ENCODE measurements at regions of chr6 and their contacts with region 1.

Region 1: GRCh38 chr6:11653028-11653583 is 115.6 kb downstream of the TMEM170B start:
- DNase-seq: peak; percentile 76
- H3K4me3 Mint-ChIP-seq: no peak overlapping the region
- H3K27ac Mint-ChIP-seq: no peak overlapping the region
- H3K4me1 Mint-ChIP-seq: peaks cover 12% of the 10 kb centered on the region
- H3K27me3 Mint-ChIP-seq: no peaks in the 10 kb centered on the region

Region 2: DNA sequence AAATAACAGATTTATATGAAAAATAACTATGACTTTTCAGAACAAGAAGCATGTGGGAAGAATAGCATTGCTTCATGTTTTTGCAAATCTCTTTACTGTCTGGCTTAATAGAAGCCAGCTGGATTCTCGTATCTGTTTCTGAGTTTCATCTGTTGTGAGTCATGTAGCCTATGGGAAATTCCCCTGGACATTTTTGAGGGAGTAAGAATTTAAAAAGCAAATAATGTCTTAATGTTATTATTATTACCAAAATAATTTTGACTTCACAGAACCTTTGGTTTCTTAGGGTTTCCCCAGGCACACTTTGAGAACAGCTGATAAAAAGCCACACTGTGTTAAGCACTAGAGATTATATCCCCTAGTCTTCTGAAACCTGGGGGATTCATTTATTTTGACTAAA is 690.4 kb before region 1 on chr6:
- CTCF ChIA-PET with region 1: no interaction called
- intact Hi-C with region 1: no loop called
- DNase-seq: no peak
- H3K4me3 Mint-ChIP-seq: no peak overlapping the region
- H3K27ac Mint-ChIP-seq: no peak overlapping the region
- H3K4me1 Mint-ChIP-seq: no peaks in the 10 kb centered on the region
- H3K27me3 Mint-ChIP-seq: peaks cover 11% of the 10 kb centered on the region

Region 3: DNA sequence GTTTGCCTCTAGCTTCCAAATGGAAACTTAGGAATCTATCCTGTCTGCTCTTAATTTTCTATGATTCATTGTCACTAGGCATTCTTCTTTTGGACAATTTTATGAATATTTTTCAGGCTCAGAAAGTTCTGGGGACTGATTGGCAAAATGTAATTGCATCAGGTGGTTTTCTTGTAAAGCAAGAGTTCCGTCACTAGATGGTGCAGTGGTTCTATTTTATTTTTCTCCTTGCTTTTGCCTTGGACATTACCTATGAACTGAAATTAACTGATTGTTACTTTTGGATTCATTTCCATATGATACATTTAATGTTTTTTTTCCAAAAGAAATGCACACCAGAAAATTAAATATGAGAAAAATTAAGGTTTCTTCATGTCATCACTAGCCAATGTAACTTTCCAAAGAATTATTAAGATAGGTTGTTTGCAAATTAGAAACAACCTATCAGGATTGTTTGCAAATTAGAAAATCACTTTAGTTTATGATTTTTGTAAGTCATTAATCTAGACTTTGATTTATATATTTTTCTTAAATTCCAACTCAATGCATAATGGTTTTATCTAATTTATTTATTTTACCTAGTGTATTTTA is 67.6 kb before region 1 on chr6:
- CTCF ChIA-PET with region 1: no interaction called
- intact Hi-C with region 1: loop called (anchors 5 kb)
- DNase-seq: peak; percentile 14
- H3K4me3 Mint-ChIP-seq: no peak overlapping the region
- H3K27ac Mint-ChIP-seq: no peak overlapping the region
- H3K4me1 Mint-ChIP-seq: no peaks in the 10 kb centered on the region
- H3K27me3 Mint-ChIP-seq: no peaks in the 10 kb centered on the region

Region 4: DNA sequence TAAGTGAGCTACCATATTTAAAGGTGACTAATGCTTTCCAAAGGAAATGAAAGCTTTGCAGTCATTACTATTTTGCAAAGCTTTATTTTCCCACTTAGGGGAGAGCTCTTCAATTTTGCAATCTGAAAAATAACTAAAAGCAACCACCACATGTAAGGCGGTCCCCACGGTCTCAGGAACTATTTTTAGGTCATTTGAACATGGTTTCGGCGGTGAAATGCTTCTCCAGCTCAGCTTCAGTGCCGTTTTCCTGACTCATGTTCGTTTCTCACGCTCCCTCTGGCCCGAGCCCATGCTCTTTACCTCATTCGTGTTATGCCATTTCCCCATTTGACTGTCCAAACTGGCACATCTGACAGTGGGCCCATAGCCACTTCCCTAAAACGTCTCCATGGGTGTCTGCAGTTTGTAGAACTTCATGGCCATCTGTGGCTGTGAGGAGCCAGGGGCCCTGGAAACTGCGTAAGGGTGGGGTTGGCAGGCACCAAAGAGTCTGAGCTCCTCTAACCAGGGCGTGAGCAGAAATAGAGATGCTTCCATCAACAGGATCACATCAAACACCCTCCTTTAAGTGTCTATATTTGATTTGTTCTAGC is 79.0 kb after region 1 on chr6:
- CTCF ChIA-PET with region 1: interaction called, 5 read pairs
- intact Hi-C with region 1: loop called (anchors 2 kb)
- DNase-seq: peak; percentile 87
- H3K4me3 Mint-ChIP-seq: peak overlapping the region; percentile 3
- H3K27ac Mint-ChIP-seq: peak overlapping the region; percentile 92
- H3K4me1 Mint-ChIP-seq: peaks cover 63% of the 10 kb centered on the region
- H3K27me3 Mint-ChIP-seq: no peaks in the 10 kb centered on the region

Region 5: DNA sequence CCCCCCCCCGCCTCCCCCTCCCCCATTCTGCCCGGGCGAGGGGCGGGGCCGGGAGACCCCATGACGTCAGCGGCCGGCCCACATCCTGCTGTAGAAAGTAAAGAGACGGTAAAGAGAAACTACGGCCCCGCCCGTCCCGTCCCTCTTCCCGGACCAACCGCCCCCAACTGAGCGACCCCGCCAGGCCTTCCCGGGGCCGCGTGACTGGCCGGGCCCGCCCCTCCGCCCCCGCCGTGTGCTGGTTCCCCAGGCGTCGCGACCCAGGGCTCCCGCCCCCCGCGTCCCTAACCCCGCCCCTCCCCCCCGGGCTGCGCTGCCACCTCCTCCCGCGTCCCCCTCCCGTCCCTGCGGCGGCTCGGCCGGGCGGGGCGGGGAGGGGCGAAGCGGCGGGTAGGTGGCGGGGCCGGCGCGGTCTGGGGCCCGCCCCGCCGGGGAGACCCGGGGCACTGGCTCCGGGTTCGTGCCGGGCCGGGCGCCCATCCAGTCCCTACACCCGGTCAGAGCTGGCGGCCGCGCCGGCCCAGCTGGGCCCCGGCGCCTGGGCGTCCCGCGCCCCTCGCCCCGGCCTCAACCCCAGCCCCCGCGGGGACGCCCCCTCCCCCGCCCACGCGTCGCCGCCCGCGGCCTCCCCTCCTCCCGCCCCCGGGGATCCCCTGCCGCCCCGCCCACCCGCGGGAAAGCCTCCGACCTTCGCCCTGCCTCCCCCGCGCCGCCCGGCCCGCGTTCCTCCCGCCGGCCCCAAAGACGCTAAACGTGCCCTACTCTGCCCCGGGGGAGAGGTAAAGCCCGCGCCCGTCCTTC is 358.4 kb after region 1 on chr6:
- CTCF ChIA-PET with region 1: interaction called, 9 read pairs
- intact Hi-C with region 1: loop called (anchors 2 kb)
- DNase-seq: peak; percentile 98
- H3K4me3 Mint-ChIP-seq: peak overlapping the region; percentile 89
- H3K27ac Mint-ChIP-seq: peak overlapping the region; percentile 53
- H3K4me1 Mint-ChIP-seq: peaks cover 49% of the 10 kb centered on the region
- H3K27me3 Mint-ChIP-seq: no peaks in the 10 kb centered on the region

Region 6: DNA sequence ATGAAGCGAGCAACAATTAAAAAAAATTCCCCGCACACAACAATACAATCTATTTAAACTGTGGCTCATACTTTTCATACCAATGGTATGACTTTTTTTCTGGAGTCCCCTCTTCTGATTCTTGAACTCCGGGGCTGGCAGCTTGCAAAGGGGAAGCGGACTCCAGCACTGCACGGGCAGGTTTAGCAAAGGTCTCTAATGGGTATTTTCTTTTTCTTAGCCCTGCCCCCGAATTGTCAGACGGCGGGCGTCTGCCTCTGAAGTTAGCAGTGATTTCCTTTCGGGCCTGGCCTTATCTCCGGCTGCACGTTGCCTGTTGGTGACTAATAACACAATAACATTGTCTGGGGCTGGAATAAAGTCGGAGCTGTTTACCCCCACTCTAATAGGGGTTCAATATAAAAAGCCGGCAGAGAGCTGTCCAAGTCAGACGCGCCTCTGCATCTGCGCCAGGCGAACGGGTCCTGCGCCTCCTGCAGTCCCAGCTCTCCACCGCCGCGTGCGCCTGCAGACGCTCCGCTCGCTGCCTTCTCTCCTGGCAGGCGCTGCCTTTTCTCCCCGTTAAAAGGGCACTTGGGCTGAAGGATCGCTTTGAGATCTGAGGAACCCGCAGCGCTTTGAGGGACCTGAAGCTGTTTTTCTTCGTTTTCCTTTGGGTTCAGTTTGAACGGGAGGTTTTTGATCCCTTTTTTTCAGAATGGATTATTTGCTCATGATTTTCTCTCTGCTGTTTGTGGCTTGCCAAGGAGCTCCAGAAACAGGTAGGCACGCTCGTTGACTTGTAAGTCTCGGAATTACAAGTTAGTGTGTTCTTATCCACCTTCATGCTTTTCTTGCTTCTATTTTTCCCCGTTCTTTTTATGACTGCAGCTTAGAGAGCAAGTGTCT is 637.1 kb after region 1 on chr6 and contains the start of gene EDN1:
- CTCF ChIA-PET with region 1: interaction called, 31 read pairs
- intact Hi-C with region 1: loop called (anchors 1 kb)
- DNase-seq: peak; percentile 76
- H3K4me3 Mint-ChIP-seq: peak within 1 kb of the TSS; percentile 79
- H3K27ac Mint-ChIP-seq: no peak within 1 kb of the TSS
- H3K4me1 Mint-ChIP-seq: peaks cover 14% of the 10 kb centered on the region
- H3K27me3 Mint-ChIP-seq: peaks cover 26% of the 10 kb centered on the region
- total RNA-seq, gene EDN1: 0.15 to 0.24 TPM

Region 7: DNA sequence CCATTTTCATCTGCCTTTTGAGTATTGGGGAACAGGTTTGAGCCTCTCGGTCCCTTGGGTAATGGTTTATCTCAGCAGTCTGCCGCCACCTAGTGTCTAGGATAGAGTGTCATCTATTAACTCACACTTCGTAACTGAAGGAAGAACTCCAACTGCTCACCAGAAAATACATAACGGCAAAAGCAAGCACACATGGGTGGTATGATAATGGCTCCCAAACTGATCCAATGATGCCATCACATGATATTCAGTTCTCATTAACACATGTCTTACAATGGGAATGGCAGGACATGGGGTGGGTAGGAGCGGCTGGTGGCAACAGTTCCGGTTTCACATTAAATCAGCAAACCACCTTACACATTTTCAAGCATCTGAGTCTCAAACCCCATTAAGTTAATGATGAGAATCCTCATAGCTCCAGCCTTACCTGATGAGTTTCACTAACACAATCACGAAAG is 952.8 kb after region 1 on chr6:
- CTCF ChIA-PET with region 1: interaction called, 12 read pairs
- intact Hi-C with region 1: loop called (anchors 1 kb)
- DNase-seq: peak; percentile 67
- H3K4me3 Mint-ChIP-seq: no peak overlapping the region
- H3K27ac Mint-ChIP-seq: no peak overlapping the region
- H3K4me1 Mint-ChIP-seq: peaks cover 11% of the 10 kb centered on the region
- H3K27me3 Mint-ChIP-seq: peaks cover 24% of the 10 kb centered on the region